ENCODE measurements at regions of chr19 and their contacts with region 1.

Region 1: GRCh38 chr19:13033819-13034611 is 38.7 kb downstream of the NFIX start:
- DNase-seq: peak in 1 of 2 donors; percentile 87
- H3K4me3 ChIP-seq: peak overlapping the region in 1 of 2 donors; percentile 18
- H3K27ac ChIP-seq: peak overlapping the region; percentile 95 to 97
- H3K4me1 ChIP-seq: peaks cover 45 to 94% of the 10 kb centered on the region in 2 donors
- H3K27me3 ChIP-seq: no peaks in the 10 kb centered on the region
- CTCF ChIP-seq: peak; percentile 67 to 73 (median 69)

Region 2: DNA sequence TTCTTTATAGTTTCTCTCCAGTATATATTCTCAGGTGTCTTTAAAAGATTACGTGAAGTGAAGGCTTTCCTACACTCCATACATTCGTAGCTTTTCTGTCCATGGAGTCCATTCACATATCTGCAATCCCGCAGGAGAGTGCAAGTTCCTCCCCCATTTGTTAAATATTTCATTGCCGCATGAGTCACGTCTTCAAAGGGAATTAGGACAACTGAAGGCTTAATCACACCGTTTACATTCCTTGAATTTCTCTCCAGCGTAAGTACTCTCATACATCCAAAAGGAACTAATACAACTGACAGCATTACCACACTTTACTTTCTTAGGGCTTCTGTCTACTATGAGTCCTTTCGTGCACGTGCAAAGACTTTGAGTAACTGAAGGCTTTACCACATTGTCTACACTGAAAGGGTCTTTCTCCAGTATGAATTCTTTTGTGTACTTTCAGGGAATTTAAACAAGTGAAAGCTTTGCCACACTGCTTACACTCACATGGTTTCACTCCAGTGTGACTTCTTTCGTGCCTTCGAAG is 453.8 kb before region 1 on chr19:
- intact Hi-C with region 1: no loop called
- DNase-seq: no peak
- H3K4me3 ChIP-seq: no peak overlapping the region
- H3K27ac ChIP-seq: no peak overlapping the region
- H3K4me1 ChIP-seq: no peaks in the 10 kb centered on the region
- H3K27me3 ChIP-seq: no peaks in the 10 kb centered on the region
- CTCF ChIP-seq: no peak

Region 3: DNA sequence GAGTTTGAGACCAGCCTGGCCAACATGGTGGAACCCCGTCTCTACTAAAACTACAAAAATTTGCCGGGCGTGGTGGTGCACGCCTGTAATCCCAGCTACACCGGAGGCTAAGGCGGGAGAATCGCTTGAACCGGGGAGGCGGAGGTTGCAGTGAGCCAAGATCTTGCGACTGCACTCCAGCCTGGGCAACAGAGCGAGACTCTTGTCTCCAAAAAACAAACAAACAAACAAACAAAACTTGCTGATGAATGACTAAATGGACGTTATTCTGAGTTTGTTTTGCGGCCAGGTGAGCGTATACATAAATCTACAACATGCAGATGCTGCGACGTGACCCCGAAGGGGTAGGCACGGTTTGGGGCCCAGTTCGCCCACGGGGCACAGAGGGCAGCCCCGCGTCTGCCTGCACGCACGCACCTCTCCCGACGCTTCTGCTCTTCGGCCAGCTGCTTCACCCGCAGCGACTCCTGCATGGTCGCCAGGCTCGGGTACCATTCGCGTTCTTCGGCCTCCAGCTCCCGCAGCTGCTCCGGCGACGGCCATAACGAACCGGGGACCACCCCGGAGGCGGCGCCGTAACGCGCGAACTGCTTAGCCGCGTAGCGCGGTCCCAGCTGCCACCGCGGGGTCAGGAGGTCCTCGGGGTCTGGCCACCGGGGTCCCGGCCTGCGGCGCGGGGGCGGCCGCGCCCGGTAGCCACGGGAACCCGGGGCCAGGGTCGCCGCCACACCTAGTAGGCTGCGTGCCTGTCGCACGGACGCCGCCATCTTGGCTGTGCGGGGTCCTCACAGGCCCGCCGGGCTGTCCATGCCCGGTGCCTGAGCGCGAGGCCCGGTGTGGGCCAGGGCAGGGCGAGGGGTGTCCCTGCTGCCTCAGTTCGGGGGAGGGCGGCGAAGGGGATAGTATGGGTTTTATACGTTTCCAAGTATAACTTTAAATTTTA is 77.3 kb before region 1 on chr19 and contains the start of gene GADD45GIP1:
- intact Hi-C with region 1: no loop called
- DNase-seq: peak in 1 of 2 donors; percentile 83
- H3K4me3 ChIP-seq: peak within 1 kb of the TSS; percentile 80 to 89
- H3K27ac ChIP-seq: peak within 1 kb of the TSS; percentile 88 to 95
- H3K4me1 ChIP-seq: peaks cover 22 to 30% of the 10 kb centered on the region in 2 donors
- H3K27me3 ChIP-seq: no peaks in the 10 kb centered on the region
- CTCF ChIP-seq: no peak
- total RNA-seq, gene GADD45GIP1: 42.7 TPM

Region 4: GRCh38 chr19:12994701-12995595 is 39.1 kb before region 1 on chr19 and contains the start of gene NFIX:
- intact Hi-C with region 1: loop called (anchors 2 kb)
- DNase-seq: peak in 1 of 2 donors; percentile 86
- H3K4me3 ChIP-seq: peak within 1 kb of the TSS; percentile 92 to 97
- H3K27ac ChIP-seq: peak within 1 kb of the TSS; percentile 95 to 98
- H3K4me1 ChIP-seq: peaks cover 3 to 33% of the 10 kb centered on the region in 2 donors
- H3K27me3 ChIP-seq: no peaks in the 10 kb centered on the region
- CTCF ChIP-seq: no peak
- total RNA-seq, gene NFIX: 76.5 TPM

Region 5: GRCh38 chr19:13002166-13002898 is 31.7 kb before region 1 on chr19:
- intact Hi-C with region 1: loop called (anchors 2 kb)
- DNase-seq: peak in 1 of 2 donors; percentile 87
- H3K4me3 ChIP-seq: peak overlapping the region; percentile 44 to 65
- H3K27ac ChIP-seq: peak overlapping the region; percentile 95 to 98
- H3K4me1 ChIP-seq: peaks cover 20 to 80% of the 10 kb centered on the region in 2 donors
- H3K27me3 ChIP-seq: no peaks in the 10 kb centered on the region
- CTCF ChIP-seq: peak; percentile 7 to 60 (median 26)

Region 6: DNA sequence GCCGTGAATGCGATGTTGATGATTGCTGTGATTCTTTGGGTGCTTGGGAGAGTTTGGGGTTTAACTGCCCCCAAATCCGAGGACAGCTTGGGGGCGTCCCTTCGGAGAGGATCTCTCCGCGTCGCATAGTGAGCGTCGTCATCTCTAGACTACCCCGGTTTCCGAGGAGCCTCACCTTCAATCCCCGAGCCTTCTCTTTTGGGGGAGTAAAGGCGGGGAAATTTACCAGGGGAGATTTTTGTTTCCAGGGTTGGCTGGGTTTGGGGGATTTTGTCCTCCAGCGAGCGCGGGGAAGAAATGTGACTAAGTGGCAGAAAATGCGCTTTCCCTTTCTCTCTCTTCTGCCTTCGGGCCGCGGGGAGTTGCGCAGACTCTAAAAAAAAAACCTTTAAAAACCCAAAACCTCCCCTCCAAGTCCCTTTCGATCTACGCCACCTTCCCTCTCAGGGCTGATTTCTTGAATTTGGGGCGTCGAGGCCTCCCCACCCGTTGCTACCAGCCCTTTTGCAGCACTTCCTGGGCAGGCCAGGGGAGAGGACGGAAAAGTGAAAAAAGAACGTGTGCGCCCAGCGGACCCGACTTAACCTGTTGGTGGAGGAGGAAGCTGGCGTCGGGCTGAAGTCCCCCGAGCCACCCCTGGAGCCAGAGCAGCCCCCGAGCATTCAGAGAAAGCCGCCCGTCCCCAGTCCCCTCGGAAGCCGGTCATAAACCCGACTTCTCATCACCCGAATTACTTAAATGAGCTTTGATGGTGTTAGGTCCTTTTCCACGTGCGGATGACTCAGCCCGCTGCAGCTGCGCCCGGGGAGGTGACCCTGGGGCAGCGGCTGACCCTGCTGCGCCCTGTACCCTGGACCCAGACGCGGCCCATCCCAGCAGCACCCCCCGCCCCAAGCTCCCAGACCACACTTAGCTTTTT is 21.1 kb before region 1 on chr19:
- intact Hi-C with region 1: loop called (anchors 2 kb)
- DNase-seq: peak in 1 of 2 donors; percentile 85
- H3K4me3 ChIP-seq: peak overlapping the region; percentile 57 to 62
- H3K27ac ChIP-seq: peak overlapping the region; percentile 95 to 97
- H3K4me1 ChIP-seq: peaks cover 29 to 69% of the 10 kb centered on the region in 2 donors
- H3K27me3 ChIP-seq: no peaks in the 10 kb centered on the region
- CTCF ChIP-seq: no peak

Region 7: DNA sequence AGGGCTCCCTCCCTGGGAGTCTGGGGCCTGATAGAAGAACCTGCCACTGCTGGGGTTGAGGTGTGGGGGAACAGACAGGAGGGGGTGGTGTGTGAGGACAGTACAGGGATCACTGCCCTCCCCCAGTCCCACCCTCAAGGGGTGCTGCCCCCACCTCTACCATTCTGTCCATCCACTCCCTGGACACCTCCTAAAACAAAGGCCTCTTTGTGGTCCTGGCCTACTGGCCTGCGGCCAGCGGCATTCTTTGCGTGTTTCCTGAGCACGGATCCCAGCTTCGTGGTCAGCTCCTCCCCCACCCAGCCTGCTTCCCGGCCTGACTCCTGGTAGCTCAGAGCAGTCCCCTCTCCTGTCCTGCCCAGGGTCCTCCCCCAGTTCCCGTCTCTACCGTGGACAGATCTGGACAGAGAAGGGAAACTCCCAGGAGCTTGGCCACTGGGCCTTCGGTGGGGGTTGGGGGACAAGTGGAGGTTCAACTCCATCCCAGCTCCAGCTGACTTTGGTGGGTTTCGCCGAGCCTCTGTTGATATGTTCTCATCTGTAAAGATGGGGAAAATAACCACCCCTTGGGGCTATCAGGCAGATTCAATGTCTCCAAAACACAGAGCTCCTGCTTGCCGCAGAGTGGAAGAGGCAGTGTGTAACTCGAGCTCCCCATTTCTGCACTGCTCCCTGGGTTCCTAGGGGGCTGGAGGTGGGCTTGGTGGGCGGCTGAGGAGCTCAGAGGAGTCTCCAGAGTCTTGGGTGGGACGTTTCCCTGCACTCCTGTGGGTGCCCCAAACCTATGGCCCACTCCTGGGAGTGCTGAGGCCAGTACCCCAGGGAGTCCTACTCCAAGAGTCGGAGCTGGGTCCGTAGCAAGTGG is 20.0 kb after region 1 on chr19:
- intact Hi-C with region 1: loop called (anchors 1 kb)
- DNase-seq: peak in 1 of 2 donors; percentile 93
- H3K4me3 ChIP-seq: no peak overlapping the region
- H3K27ac ChIP-seq: peak overlapping the region; percentile 99
- H3K4me1 ChIP-seq: peaks cover 73 to 97% of the 10 kb centered on the region in 2 donors
- H3K27me3 ChIP-seq: no peaks in the 10 kb centered on the region
- CTCF ChIP-seq: no peak

Measured in ascending aorta (tissue), 2 donors.